CD14-positive monocyte (primary cell): ENCODE measurements at regions of chr22 and their contacts with region 1.

Region 1: DNA sequence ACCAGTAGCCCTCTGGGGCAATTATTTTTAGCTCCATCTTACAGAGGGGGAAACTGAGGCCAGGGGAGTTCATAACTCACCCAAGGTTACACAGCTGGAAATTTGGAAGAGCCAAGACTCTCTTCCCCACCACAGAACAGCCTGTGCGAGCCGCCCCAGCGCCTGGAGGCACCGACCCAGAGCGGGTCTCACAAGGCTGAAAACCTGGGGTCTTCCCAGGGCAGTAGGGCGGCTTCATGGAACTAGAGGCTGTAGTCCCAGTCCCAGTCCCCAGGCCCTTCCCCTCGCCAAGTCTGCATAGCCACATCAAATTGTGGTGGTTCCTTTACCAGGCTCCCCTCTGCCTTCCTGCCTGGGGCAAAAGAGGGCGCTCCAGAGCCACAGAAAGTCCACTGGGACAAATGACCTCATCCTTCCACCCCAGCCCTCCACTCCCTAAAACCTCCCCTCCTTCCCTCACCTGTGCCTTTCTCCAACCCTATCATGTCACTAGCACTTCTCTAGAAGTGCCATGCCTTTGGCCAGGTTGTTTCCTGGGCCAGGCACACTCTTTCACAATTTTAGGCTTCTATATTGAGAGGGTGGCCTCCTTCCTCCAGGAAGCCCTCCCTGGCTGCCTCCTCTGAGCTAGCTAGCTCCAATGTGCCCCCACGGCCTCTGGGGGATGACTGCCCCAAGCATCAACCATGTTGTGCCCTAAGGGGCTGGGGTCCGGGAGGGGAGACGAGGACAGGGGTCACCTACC is 15.2 kb upstream of the CDC42EP1 start:
- DNase-seq: peak; percentile 64 to 76 (median 67)
- H3K4me3 ChIP-seq: peak overlapping the region in 1 of 3 experiments; percentile 35
- H3K4me3 Mint-ChIP-seq: peak overlapping the region in 1 of 2 donors; percentile 51
- H3K27ac ChIP-seq: no peak overlapping the region
- H3K27ac Mint-ChIP-seq: peak overlapping the region in 3 of 7 donors; percentile 60 to 79 (median 73)
- H3K4me1 ChIP-seq: peaks cover 30 to 36% of the 10 kb centered on the region in 2 donors
- H3K4me1 Mint-ChIP-seq: peaks cover 31% of the 10 kb centered on the region
- H3K27me3 ChIP-seq: no peaks in the 10 kb centered on the region
- H3K27me3 Mint-ChIP-seq: peaks cover 7 to 14% (median 10%) of the 10 kb centered on the region in 3 donors
- CTCF ChIP-seq: peak; percentile 85

Region 2: DNA sequence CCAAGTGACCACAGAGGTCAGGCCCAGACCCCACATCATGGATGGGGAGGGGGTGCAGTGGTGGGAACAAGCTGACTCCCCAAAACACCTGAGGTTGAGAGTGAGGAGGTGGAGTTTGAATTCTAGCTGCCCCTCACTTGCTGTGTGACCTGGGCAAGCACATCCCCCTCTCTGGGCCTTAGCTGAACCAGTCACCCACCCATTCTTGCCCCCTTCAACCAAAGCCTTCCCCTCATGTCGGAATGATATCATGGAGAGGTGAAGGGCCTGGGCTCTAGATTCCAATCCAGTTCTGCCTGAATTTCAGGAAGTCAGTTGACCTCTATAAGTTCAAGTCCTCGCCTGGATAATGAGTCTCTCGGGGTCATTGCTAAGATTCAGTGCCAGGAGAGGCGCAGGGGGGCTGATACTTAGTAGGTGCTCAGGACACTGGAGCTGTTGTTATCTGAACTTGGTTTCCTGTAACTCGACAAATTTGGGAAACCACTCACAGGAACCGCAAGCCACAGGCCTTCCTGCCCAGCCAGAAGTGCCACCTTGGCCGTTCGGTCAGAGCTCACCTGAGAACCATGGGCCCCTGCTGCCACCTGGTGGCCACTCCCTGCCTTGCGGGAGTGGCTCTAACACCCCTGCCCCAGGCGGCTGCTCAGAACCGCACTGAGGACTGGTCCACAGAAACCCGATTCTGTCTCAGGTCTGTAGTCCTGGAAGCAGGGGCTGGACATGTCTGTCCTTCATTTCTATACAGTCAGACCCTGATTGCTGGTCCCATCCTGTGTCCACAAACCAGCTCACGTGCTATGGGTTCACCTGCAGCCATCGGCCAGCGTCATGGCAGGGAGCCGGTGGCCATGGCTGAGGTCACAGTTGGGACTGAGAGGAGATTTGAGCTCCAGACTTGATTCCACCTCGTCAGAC is 22.0 kb after region 1 on chr22:
- intact Hi-C with region 1: loop called in 1 of 2 experiments (anchors 2 kb)
- DNase-seq: peak; percentile 68 to 80 (median 77)
- H3K4me3 ChIP-seq: peak overlapping the region in 1 of 3 experiments; percentile 37
- H3K4me3 Mint-ChIP-seq: peak overlapping the region in 1 of 2 donors; percentile 64
- H3K27ac ChIP-seq: peak overlapping the region in 1 of 2 donors; percentile 25
- H3K27ac Mint-ChIP-seq: peak overlapping the region in 6 of 7 donors; percentile 33 to 79 (median 62)
- H3K4me1 ChIP-seq: peaks cover 44 to 83% of the 10 kb centered on the region in 2 donors
- H3K4me1 Mint-ChIP-seq: peaks cover 60% of the 10 kb centered on the region
- H3K27me3 ChIP-seq: peaks cover 0 to 6% of the 10 kb centered on the region in 2 donors
- H3K27me3 Mint-ChIP-seq: peaks cover 17 to 29% (median 26%) of the 10 kb centered on the region in 3 donors
- CTCF ChIP-seq: peak; percentile 98

Region 3: DNA sequence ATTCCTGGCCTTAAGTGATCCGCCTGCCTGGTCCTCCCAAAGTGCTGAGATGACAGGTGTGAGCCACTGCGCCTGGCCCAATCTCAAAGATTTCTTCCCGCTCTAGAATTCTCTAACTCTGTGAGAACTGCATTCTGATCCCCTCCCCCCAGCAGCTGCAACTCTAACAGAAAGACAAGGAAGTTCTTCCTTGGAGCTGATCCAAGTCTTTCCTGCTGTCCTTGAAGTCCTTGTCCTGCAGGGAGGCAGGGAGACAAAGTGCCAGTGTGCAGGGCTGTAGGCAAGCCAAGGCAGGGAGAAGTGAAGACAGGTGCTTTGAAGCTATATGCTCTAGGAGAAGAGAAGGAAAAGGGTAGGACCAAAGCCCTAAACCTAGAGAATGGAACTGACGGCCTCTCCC is 54.0 kb after region 1 on chr22:
- intact Hi-C with region 1: loop called in 1 of 2 experiments (anchors 2 kb)
- DNase-seq: no peak
- H3K4me3 ChIP-seq: no peak overlapping the region
- H3K4me3 Mint-ChIP-seq: no peak overlapping the region
- H3K27ac ChIP-seq: no peak overlapping the region
- H3K27ac Mint-ChIP-seq: no peak overlapping the region
- H3K4me1 ChIP-seq: peaks cover 4% of the 10 kb centered on the region in 2 donors
- H3K4me1 Mint-ChIP-seq: peaks cover 15% of the 10 kb centered on the region
- H3K27me3 ChIP-seq: no peaks in the 10 kb centered on the region
- H3K27me3 Mint-ChIP-seq: peaks cover 3 to 9% (median 8%) of the 10 kb centered on the region in 3 donors
- CTCF ChIP-seq: no peak